ENCODE measurements at regions of chr2 and their contacts with region 1.

Region 1: DNA sequence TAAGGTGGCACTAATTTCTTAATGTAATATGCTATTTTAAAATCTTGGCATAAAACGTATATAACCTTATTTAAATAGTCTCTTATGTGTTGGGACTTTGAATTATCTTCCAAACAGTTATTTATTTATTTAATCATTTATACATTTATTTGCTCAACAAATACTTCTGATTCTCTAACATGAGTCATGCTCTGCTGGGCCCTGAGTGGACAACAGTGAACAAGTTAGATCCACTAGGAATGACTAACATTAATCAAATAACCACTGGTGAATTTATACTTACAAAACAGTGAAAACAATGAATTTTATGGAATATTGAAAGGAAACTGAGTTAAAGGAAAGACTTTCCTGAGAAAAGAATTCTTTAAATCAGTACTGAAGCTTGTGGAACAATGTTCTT is 1257.2 kb upstream of the CHAC2 start:
- DNase-seq: no peak
- ATAC-seq: no peak
- H3K4me3 ChIP-seq: no peak overlapping the region
- H3K27ac ChIP-seq: no peak overlapping the region
- H3K4me1 ChIP-seq: no peaks in the 10 kb centered on the region
- H3K27me3 ChIP-seq: no peaks in the 10 kb centered on the region
- CTCF ChIP-seq: no peak

Region 2: GRCh38 chr2:52356556-52356955 is 153.9 kb before region 1 on chr2:
- intact Hi-C with region 1: no loop called
- DNase-seq: no peak
- ATAC-seq: no peak
- H3K4me3 ChIP-seq: no peak overlapping the region
- H3K27ac ChIP-seq: no peak overlapping the region
- H3K4me1 ChIP-seq: no peaks in the 10 kb centered on the region
- H3K27me3 ChIP-seq: no peaks in the 10 kb centered on the region
- CTCF ChIP-seq: no peak

Region 3: DNA sequence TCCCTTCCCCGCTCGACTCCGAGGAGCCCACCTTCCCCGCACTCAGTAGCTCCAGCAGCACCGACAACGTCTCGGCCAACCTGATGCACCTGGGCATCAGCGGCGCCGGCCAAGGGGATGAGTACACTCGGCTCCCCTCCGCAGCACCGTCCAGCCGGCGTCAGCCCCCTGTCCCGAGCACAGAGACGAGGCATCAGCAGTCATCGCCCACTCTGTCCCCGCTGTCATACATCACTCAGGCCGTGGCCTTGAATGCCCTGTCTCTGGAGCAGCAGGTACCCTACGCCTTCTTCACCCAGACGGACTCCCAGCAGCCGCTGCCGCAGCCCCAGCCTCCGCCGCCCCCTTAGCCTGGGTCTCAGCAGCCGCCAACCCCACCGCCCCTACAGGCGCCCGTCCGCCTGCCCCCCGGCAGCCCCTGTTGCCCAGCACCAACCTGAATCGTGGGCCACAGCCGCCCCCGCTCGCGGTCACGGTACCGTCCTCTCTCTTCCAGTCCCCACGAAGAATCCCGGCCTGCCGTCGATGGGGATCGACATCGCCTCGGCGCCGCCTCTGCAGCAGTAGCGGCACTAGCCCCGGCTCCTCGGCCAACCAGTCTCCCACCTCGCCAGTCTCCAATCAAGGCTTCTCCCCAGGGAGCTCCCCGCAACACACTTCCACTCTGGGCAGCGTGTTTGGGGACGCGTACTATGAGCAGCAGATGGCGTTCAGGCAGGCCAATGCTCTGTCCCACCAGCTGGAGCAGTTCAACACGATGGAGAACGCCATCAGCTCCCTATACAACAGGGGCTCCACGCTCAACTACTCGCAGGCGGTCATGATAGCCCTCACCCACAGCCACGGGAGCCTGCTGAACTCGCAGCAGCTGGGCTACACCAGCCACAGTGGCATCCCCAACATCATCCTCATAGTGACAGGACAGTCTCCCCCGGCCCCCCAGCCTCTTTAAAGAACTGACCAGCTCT is 61.2 kb after region 1 on chr2:
- intact Hi-C with region 1: loop called in 1 of 10 experiments (anchors 2 kb)
- DNase-seq: peak in 1 of 2 donors; percentile 10
- ATAC-seq: peak in 1 of 8 donors; percentile 17
- H3K4me3 ChIP-seq: no peak overlapping the region
- H3K27ac ChIP-seq: no peak overlapping the region
- H3K4me1 ChIP-seq: no peaks in the 10 kb centered on the region
- H3K27me3 ChIP-seq: no peaks in the 10 kb centered on the region
- CTCF ChIP-seq: no peak